ENCODE measurements at regions of chr4 and their contacts with region 1.

Region 1: DNA sequence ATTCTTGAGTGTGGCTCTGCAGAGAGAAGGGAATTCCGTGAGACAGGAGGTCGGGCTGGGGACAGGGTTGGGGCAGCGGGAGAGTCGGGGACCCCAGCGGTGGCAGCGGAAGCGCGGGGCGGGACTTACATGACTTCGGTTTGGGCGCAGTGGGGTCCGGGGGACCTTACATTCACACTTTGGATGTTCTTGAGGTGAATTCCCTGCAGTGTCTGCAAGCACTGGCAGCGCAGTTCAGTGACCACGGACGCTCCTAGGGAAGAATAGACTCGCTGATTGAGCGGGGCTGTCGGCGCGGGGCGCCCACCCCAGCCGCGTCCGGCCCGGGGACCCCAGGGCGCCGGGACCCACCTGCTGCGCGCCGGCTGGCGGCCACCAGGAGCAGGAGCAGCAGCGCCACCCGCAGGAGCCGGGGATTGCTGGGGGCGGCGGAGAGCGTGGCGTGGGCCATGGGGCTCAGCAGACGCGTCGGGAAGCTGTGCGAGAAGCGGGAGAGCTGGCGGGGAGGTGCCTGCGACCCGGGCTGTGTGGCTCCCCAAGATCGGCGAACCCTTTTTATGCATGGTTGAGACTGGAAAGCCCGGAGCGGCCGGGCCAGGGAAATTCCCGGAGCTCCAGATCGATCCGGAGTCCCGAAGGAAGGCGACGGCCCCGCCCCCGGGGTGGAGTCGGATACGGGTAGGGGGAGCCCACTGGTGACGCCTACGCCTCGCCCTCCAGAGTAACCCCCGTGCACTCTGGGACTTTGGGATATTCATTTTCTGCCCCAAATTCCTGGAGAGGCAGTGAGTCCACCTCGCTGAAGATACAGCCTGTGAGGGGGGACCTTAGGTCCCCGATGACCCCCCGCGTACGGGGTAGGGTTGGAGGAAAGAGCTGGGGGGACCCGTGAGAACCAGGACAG is at the start of gene CXCL3:
- DNase-seq: peak; percentile 64
- H3K4me3 Mint-ChIP-seq: peak within 1 kb of the TSS; percentile 86
- H3K27ac Mint-ChIP-seq: peak within 1 kb of the TSS; percentile 81
- H3K4me1 Mint-ChIP-seq: peaks cover 37% of the 10 kb centered on the region
- H3K27me3 Mint-ChIP-seq: no peaks in the 10 kb centered on the region
- CTCF ChIP-seq: peak; percentile 40
- total RNA-seq, gene CXCL3: 9.2 and 9.8 TPM in 2 replicates

Region 2: GRCh38 chr4:73662709-73663546 is 375.5 kb before region 1 on chr4:
- CTCF ChIA-PET with region 1: interaction called, 7 read pairs
- POLR2A ChIA-PET with region 1: no interaction called
- intact Hi-C with region 1: loop called (anchors 5 kb)
- DNase-seq: peak; percentile 70
- H3K4me3 Mint-ChIP-seq: no peak overlapping the region
- H3K27ac Mint-ChIP-seq: peak overlapping the region; percentile 23
- H3K4me1 Mint-ChIP-seq: peaks cover 7% of the 10 kb centered on the region
- H3K27me3 Mint-ChIP-seq: no peaks in the 10 kb centered on the region
- CTCF ChIP-seq: peak; percentile 64

Region 3: DNA sequence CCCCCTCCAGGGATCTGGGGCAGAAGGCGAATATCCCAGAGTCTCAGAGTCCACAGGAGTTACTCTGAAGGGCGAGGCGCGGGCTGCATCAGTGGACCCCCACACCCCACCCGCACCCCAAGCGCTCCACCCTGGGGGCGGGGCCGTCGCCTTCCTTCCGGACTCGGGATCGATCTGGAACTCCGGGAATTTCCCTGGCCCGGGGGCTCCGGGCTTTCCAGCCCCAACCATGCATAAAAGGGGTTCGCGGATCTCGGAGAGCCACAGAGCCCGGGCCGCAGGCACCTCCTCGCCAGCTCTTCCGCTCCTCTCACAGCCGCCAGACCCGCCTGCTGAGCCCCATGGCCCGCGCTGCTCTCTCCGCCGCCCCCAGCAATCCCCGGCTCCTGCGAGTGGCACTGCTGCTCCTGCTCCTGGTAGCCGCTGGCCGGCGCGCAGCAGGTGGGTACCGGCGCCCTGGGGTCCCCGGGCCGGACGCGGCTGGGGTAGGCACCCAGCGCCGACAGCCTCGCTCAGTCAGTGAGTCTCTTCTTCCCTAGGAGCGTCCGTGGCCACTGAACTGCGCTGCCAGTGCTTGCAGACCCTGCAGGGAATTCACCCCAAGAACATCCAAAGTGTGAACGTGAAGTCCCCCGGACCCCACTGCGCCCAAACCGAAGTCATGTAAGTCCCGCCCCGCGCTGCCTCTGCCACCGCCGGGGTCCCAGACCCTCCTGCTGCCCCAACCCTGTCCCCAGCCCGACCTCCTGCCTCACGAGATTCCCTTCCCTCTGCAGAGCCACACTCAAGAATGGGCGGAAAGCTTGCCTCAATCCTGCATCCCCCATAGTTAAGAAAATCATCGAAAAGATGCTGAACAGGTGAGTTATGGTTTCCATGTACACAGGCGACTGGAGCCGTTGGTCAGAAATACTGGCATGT is 169.0 kb before region 1 on chr4 and contains the start of gene CXCL1:
- CTCF ChIA-PET with region 1: interaction called, 38 read pairs
- POLR2A ChIA-PET with region 1: interaction called, 21 read pairs
- intact Hi-C with region 1: loop called (anchors 2 kb)
- DNase-seq: peak; percentile 74
- H3K4me3 Mint-ChIP-seq: peak within 1 kb of the TSS; percentile 95
- H3K27ac Mint-ChIP-seq: peak within 1 kb of the TSS; percentile 92
- H3K4me1 Mint-ChIP-seq: peaks cover 37% of the 10 kb centered on the region
- H3K27me3 Mint-ChIP-seq: no peaks in the 10 kb centered on the region
- CTCF ChIP-seq: no peak
- total RNA-seq, gene CXCL1: 35.0 and 49.3 TPM in 2 replicates

Region 4: DNA sequence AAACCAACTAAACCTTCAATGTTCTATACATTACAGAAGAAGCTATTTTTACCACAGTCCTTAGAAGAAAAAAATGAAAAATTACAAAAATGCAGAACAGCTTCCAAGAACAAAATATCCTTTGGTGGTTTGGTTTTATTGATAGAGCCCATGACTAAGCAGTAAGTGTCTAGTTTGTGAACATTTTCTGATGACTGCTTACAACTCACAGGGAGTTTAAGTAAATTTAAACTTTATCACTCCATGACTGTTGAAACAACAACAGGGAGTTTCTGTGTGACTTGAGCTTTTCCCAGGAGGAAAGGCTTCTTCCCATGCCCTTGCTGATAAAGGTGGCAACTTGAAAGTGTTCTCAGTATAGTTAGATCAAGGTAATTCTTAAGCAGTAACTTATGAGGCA is 59.5 kb before region 1 on chr4:
- CTCF ChIA-PET with region 1: no interaction called
- POLR2A ChIA-PET with region 1: no interaction called
- intact Hi-C with region 1: no loop called
- DNase-seq: peak; percentile 36
- H3K4me3 Mint-ChIP-seq: no peak overlapping the region
- H3K27ac Mint-ChIP-seq: no peak overlapping the region
- H3K4me1 Mint-ChIP-seq: peaks cover 9% of the 10 kb centered on the region
- H3K27me3 Mint-ChIP-seq: no peaks in the 10 kb centered on the region
- CTCF ChIP-seq: no peak

Region 5: GRCh38 chr4:74056858-74057562 is 18.6 kb after region 1 on chr4:
- CTCF ChIA-PET with region 1: interaction called, 7 read pairs
- POLR2A ChIA-PET with region 1: interaction called, 6 read pairs
- intact Hi-C with region 1: loop called (anchors 2 kb)
- DNase-seq: peak; percentile 70
- H3K4me3 Mint-ChIP-seq: no peak overlapping the region
- H3K27ac Mint-ChIP-seq: peak overlapping the region; percentile 53
- H3K4me1 Mint-ChIP-seq: peaks cover 19% of the 10 kb centered on the region
- H3K27me3 Mint-ChIP-seq: no peaks in the 10 kb centered on the region
- CTCF ChIP-seq: no peak

Region 6: GRCh38 chr4:74109116-74109869 is 70.9 kb after region 1 on chr4:
- CTCF ChIA-PET with region 1: interaction called, 14 read pairs
- POLR2A ChIA-PET with region 1: interaction called, 25 read pairs
- intact Hi-C with region 1: no loop called
- DNase-seq: peak; percentile 96
- H3K4me3 Mint-ChIP-seq: peak overlapping the region; percentile 14
- H3K27ac Mint-ChIP-seq: peak overlapping the region; percentile 96
- H3K4me1 Mint-ChIP-seq: peaks cover 55% of the 10 kb centered on the region
- H3K27me3 Mint-ChIP-seq: no peaks in the 10 kb centered on the region
- CTCF ChIP-seq: no peak

Region 7: GRCh38 chr4:74117024-74117534 is 78.7 kb after region 1 on chr4:
- CTCF ChIA-PET with region 1: interaction called, 14 read pairs
- POLR2A ChIA-PET with region 1: interaction called, 25 read pairs
- intact Hi-C with region 1: loop called (anchors 5 kb)
- DNase-seq: peak; percentile 96
- H3K4me3 Mint-ChIP-seq: peak overlapping the region; percentile 88
- H3K27ac Mint-ChIP-seq: peak overlapping the region; percentile 99
- H3K4me1 Mint-ChIP-seq: peaks cover 44% of the 10 kb centered on the region
- H3K27me3 Mint-ChIP-seq: no peaks in the 10 kb centered on the region
- CTCF ChIP-seq: no peak

Region 8: DNA sequence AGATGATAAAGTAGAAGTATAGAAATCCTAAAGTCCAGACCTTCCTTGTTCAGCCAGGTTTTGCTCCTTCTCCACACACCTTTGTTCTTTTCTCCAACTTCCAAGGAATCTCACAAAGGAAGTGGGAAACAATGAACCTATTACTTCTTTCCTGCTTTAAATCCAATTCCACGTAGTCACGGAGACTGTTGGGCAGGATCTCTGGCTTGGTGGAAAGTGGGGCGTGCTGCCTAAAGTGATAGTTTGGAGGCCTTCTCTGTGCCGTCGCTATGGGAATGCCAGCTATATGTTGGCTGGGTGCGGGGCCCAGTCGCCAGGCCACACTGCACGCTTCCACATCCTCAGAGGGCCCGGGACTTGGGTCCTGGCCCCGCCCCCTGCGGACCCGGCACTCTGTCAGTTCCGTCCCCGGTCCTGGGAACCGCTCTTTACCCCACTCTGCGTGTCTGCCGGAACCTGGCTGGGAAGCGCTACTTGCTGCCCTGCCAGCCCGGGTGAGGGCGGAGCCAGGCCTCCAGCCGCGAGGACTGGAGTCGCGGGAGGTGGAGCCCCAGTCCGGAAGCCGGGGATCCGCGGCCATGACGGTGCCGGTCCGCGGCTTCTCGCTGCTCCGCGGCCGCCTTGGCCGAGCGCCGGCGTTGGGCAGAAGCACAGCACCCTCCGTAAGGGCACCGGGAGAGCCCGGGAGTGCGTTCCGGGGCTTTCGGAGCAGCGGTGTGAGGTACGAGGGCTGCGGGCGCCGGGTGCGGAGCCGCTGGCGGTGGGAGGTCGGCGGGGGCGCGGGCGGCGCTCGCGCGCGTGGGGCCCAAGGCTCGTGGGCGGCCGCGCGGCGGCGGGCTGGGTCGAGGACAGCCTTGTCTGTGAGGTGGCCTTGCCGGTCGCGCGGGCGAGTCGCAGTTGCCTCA is 119.4 kb after region 1 on chr4 and contains the start of gene MTHFD2L:
- CTCF ChIA-PET with region 1: interaction called, 3 read pairs
- POLR2A ChIA-PET with region 1: interaction called, 11 read pairs
- intact Hi-C with region 1: loop called (anchors 5 kb)
- DNase-seq: peak; percentile 95
- H3K4me3 Mint-ChIP-seq: peak within 1 kb of the TSS; percentile 91
- H3K27ac Mint-ChIP-seq: peak within 1 kb of the TSS; percentile 94
- H3K4me1 Mint-ChIP-seq: peaks cover 33% of the 10 kb centered on the region
- H3K27me3 Mint-ChIP-seq: no peaks in the 10 kb centered on the region
- CTCF ChIP-seq: no peak
- total RNA-seq, gene MTHFD2L: 110 and 113 TPM in 2 replicates